ENCODE measurements at regions of chr16 and their contacts with region 1.

Region 1: GRCh38 chr16:17359788-17360390 is 110.9 kb downstream of the XYLT1 start:
- DNase-seq: peak; percentile 31
- H3K4me3 Mint-ChIP-seq: no peak overlapping the region
- H3K27ac Mint-ChIP-seq: peak overlapping the region; percentile 72
- H3K4me1 Mint-ChIP-seq: peaks cover 75% of the 10 kb centered on the region
- H3K27me3 Mint-ChIP-seq: no peaks in the 10 kb centered on the region

Region 2: GRCh38 chr16:17346621-17347569 is 13.0 kb before region 1 on chr16:
- CTCF ChIA-PET with region 1: interaction called, 12 read pairs
- POLR2A ChIA-PET with region 1: no interaction called
- DNase-seq: peak; percentile 27
- H3K4me3 Mint-ChIP-seq: no peak overlapping the region
- H3K27ac Mint-ChIP-seq: peak overlapping the region; percentile 97
- H3K4me1 Mint-ChIP-seq: peaks cover 86% of the 10 kb centered on the region
- H3K27me3 Mint-ChIP-seq: no peaks in the 10 kb centered on the region

Region 3: DNA sequence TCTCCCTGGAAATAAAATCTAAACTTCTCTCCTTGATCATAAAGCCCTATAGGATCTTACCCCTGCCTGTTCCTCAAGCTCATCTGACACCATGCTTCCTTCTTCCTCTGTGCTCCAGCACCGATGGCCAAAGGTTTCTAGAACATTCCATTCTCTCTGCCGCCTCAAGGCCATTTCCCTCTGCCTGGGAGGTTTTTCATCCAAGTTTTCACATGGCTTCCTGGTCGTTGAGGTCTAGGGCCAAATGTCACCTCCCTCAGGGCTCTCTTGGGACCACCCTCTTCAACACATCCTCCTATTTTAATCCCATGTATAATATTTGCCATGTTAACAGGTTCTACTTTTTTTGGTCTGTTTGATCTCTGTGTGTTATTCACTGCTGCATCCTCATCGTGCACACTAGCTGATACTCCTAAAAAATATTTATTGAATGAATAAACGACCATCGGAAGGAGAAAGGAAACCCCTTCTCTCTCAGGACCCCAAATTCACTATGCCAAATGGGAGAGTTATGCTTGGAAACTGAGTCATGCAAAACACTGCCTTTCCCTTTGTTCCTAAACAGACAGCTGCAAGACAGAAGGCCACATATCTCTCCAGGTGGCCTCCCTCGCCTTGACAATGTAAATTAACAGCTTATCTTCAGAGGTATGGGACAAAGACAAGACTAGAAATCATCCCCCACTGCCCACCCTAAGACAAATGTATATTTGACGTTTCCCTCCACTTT is 32.4 kb after region 1 on chr16:
- CTCF ChIA-PET with region 1: no interaction called
- POLR2A ChIA-PET with region 1: no interaction called
- DNase-seq: no peak
- H3K4me3 Mint-ChIP-seq: no peak overlapping the region
- H3K27ac Mint-ChIP-seq: no peak overlapping the region
- H3K4me1 Mint-ChIP-seq: peaks cover 45% of the 10 kb centered on the region
- H3K27me3 Mint-ChIP-seq: no peaks in the 10 kb centered on the region